ENCODE measurements at regions of chr11 and their contacts with region 1.

Region 1: GRCh38 chr11:123072332-123072761 is 10.4 kb upstream of the HSPA8 start:
- DNase-seq: peak; percentile 89 to 97
- H3K4me3 ChIP-seq: no peak overlapping the region
- H3K27ac ChIP-seq: peak overlapping the region; percentile 55
- H3K4me1 ChIP-seq: peaks cover 19% of the 10 kb centered on the region
- H3K27me3 ChIP-seq: no peaks in the 10 kb centered on the region
- CTCF ChIP-seq: no peak

Region 2: DNA sequence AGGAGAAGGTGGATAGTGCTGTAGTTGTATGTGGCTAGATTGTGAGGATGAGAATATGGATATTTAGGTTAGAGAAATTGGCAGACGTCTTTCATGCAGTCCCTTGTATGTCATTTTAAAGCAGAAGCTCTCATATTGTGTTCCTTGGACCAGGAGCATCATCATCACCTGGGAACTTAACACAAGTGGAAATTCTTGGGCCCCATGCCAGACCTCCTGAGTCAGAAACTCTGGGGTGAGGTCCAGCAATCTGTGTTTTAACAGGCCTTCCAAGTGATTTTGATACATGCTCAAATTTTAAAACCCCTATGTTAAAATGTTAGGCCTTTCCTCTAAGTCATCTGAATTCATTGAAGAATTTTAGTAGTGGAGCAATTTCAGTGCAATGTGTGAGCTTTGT is 155.0 kb before region 1 on chr11:
- CTCF ChIA-PET with region 1: no interaction called
- POLR2A ChIA-PET with region 1: no interaction called
- intact Hi-C with region 1: no loop called
- DNase-seq: peak in 1 of 2 experiments; percentile 5
- H3K4me3 ChIP-seq: no peak overlapping the region
- H3K27ac ChIP-seq: no peak overlapping the region
- H3K4me1 ChIP-seq: no peaks in the 10 kb centered on the region
- H3K27me3 ChIP-seq: no peaks in the 10 kb centered on the region
- CTCF ChIP-seq: no peak

Region 3: DNA sequence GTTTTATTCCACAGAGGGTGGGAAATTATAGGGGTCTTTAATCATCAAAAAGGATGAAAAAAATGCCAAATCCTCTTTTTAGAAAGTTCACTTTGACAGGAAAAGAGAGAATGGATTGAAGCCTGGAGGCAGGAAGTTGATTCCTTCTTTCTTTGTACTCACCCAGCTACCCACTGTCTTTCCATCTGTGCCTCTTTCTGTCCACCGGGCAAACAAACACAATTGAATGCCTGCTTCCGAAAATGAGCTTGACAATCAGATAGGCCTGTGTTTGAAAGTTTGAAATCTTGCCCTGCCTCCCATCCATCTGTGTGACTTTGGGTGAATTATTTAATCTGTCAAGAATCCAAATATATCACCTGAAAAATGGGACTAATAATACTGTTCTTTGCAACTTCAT is 500.9 kb after region 1 on chr11:
- CTCF ChIA-PET with region 1: interaction called, 11 read pairs
- POLR2A ChIA-PET with region 1: no interaction called
- intact Hi-C with region 1: no loop called
- DNase-seq: no peak
- H3K4me3 ChIP-seq: no peak overlapping the region
- H3K27ac ChIP-seq: no peak overlapping the region
- H3K4me1 ChIP-seq: no peaks in the 10 kb centered on the region
- H3K27me3 ChIP-seq: no peaks in the 10 kb centered on the region
- CTCF ChIP-seq: no peak

Measured in PC-9 (cell line).